Dendritic cell treated with granulocyte-macrophage colony-stimulating factor and Interleukin-4, amounts not matched to agents 40 ng/mL and 50 ng/mL, for 4 days (primary cell): ENCODE measurements at regions of chr14 and their contacts with region 1.

Region 1: GRCh38 chr14:60116181-60116580 is 24.5 kb downstream of the PCNX4 start:
- H3K4me3 Mint-ChIP-seq: no peak overlapping the region
- H3K27ac Mint-ChIP-seq: no peak overlapping the region
- H3K4me1 Mint-ChIP-seq: peaks cover 11% of the 10 kb centered on the region
- H3K27me3 Mint-ChIP-seq: no peaks in the 10 kb centered on the region

Region 2: DNA sequence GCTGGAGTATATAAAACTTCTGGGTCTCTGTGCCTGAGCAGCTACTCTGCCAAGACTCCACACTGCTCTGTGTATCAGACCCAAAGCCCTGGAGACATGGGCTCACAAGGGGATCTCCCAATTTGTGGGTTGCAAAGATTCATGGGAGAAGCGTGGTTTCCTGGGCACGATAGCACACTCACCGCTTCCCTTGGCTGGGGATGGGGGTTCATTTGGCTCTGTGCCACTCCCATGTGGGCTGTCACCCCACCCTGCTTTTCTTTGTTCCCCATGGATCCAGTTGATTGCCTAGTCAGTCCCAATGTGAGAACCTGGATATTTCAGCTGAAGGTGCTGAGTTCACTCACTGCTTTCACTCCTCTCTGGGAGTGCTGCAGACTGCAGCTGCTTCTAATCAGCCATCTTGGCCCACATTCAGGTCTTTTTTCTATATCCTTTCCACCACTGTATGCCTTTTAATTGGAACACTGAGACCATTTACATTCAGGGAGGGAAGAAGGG is 64.4 kb before region 1 on chr14:
- intact Hi-C with region 1: no loop called
- H3K4me3 Mint-ChIP-seq: no peak overlapping the region
- H3K27ac Mint-ChIP-seq: no peak overlapping the region
- H3K4me1 Mint-ChIP-seq: peaks cover 4% of the 10 kb centered on the region
- H3K27me3 Mint-ChIP-seq: no peaks in the 10 kb centered on the region

Region 3: GRCh38 chr14:60079724-60080123 is 36.5 kb before region 1 on chr14:
- intact Hi-C with region 1: loop called (anchors 5 kb)
- H3K4me3 Mint-ChIP-seq: no peak overlapping the region
- H3K27ac Mint-ChIP-seq: no peak overlapping the region
- H3K4me1 Mint-ChIP-seq: no peaks in the 10 kb centered on the region
- H3K27me3 Mint-ChIP-seq: no peaks in the 10 kb centered on the region

Region 4: GRCh38 chr14:60151715-60152114 is 35.5 kb after region 1 on chr14:
- intact Hi-C with region 1: loop called (anchors 5 kb)
- H3K4me3 Mint-ChIP-seq: no peak overlapping the region
- H3K27ac Mint-ChIP-seq: peak overlapping the region; percentile 38
- H3K4me1 Mint-ChIP-seq: peaks cover 32% of the 10 kb centered on the region
- H3K27me3 Mint-ChIP-seq: no peaks in the 10 kb centered on the region